Endothelial cell of umbilical vein (primary cell): ENCODE measurements at regions of chr11 and their contacts with region 1.

Region 1: DNA sequence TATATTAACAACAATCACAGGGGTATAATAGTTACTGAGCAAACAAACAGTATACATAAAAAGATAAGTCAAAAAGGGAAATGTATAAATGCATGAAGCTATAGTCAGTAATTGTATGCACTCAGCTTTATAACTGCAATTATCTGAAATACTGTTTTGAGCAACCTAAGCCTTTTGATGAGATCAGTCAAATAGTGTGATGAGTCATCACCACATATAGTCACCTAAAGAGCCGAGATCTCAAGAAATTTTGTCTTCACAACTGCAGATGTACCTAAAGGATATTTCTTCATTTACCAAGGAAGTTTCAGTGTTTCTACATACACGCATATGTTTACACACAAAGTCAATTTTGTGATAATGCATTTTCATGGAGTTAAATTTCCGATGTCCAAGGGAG is 5.4 kb upstream of the OR51A2 start:
- DNase-seq: no peak
- H3K4me3 ChIP-seq: no peak overlapping the region
- H3K27ac ChIP-seq: no peak overlapping the region
- H3K4me1 ChIP-seq: no peaks in the 10 kb centered on the region
- H3K27me3 ChIP-seq: no peaks in the 10 kb centered on the region
- CTCF ChIP-seq: no peak
- POLR2A ChIP-seq: no peak

Region 2: DNA sequence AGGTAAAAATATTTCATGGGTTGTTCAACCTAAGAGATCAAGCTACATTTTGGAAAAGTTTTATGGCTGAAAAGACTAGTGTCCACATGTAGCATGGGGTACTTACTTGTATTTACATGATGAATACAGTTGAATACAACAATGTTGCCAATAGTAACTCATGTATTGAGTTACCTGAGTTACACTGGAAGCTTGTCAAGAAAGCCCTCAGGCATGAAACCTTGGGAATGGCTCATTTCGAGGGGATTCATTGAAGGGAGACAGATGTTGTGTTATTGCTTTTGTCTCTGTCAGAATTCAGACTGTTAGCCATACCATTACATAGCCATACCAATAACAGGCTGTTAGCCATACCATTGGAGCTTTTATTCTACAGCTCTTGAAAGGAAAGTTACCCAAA is 130.5 kb before region 1 on chr11:
- CTCF ChIA-PET with region 1: no interaction called
- POLR2A ChIA-PET with region 1: no interaction called
- dilution Hi-C with region 1: no loop called
- intact Hi-C with region 1: no loop called
- DNase-seq: no peak
- H3K4me3 ChIP-seq: no peak overlapping the region
- H3K27ac ChIP-seq: no peak overlapping the region
- H3K4me1 ChIP-seq: no peaks in the 10 kb centered on the region
- H3K27me3 ChIP-seq: no peaks in the 10 kb centered on the region
- CTCF ChIP-seq: no peak
- POLR2A ChIP-seq: no peak

Region 3: GRCh38 chr11:4947505-4947904 is 13.4 kb before region 1 on chr11 and contains the start of gene OR51A4:
- CTCF ChIA-PET with region 1: no interaction called
- POLR2A ChIA-PET with region 1: no interaction called
- dilution Hi-C with region 1: no loop called
- intact Hi-C with region 1: loop called (anchors 1 kb)
- DNase-seq: no peak
- H3K4me3 ChIP-seq: no peak within 1 kb of the TSS
- H3K27ac ChIP-seq: no peak within 1 kb of the TSS
- H3K4me1 ChIP-seq: no peaks in the 10 kb centered on the region
- H3K27me3 ChIP-seq: no peaks in the 10 kb centered on the region
- CTCF ChIP-seq: no peak
- POLR2A ChIP-seq: no peak
- total RNA-seq, gene OR51A4: not detected in 2 replicates

Region 4: DNA sequence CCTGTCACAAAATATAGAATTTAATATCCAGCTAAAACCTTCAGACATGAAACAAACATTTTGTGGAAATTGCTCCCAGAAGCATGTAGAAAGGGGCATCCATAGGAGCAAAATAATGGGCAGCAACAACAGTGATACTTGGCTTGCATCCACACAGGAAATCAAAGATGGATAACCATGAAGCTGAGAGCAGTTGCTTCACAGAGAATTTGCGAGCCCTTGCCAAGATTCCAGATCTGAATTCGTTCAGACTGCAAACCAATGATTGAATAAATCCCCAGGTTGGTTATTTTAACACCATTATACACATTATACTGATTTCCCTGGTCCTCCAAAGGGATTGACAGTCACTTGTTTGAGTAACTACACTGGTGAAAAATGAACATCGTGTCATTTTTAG is 18.2 kb after region 1 on chr11:
- CTCF ChIA-PET with region 1: no interaction called
- POLR2A ChIA-PET with region 1: no interaction called
- dilution Hi-C with region 1: no loop called
- intact Hi-C with region 1: no loop called
- DNase-seq: no peak
- H3K4me3 ChIP-seq: no peak overlapping the region
- H3K27ac ChIP-seq: no peak overlapping the region
- H3K4me1 ChIP-seq: no peaks in the 10 kb centered on the region
- H3K27me3 ChIP-seq: no peaks in the 10 kb centered on the region
- CTCF ChIP-seq: no peak
- POLR2A ChIP-seq: no peak